CD14-positive monocyte (primary cell): ENCODE measurements at regions of chr2 and their contacts with region 1.

Region 1: DNA sequence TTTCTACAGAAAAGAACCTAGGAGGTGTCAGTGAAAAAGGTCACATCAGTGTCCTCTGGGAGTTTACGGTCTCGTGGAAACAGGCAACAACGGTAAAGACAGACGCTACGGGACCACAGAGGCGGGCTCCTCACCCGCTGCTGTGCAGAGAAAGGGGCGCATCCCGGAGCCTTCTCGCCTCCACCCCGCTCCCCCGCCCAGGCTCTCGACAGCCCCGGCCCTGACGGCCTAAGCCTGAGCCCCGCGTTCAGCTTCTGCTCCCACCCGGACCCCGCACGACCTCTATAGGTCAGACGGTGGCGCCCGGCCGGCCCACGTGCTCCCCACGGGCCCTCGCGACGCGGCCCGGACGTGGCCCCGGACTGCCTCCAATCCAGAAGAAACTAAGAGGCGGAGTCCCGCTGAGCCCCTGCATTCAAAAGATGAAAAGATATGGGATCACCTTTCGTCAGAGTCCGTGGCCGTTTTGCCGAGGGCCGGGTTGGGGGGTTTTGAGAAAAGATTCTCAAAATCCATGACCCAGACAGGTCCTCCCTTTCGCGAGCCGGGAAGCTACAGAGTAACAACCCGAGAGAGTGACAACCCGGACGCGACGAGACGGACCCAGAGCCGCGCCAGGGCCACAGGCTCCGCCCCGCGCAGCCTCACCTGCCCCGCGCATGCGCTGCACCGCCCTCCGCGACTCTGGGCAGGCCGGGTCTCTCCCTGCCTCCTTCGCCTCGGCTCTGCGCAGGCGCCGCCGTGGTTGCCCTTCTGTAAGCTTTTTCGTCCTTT is at the start of gene ZC3H8:
- DNase-seq: peak; percentile 88 to 90 (median 90)
- H3K4me3 ChIP-seq: peak within 1 kb of the TSS; percentile 48 to 82 (median 58)
- H3K4me3 Mint-ChIP-seq: peak within 1 kb of the TSS; percentile 84 to 90
- H3K27ac ChIP-seq: peak within 1 kb of the TSS; percentile 85
- H3K27ac Mint-ChIP-seq: peak within 1 kb of the TSS; percentile 91 to 97 (median 96)
- H3K4me1 ChIP-seq: peaks cover 37 to 49% of the 10 kb centered on the region in 2 donors
- H3K4me1 Mint-ChIP-seq: peaks cover 40% of the 10 kb centered on the region
- H3K27me3 ChIP-seq: no peaks in the 10 kb centered on the region
- H3K27me3 Mint-ChIP-seq: peaks cover 0 to 1% (median 0%) of the 10 kb centered on the region in 3 donors
- CTCF ChIP-seq: no peak
- polyA plus RNA-seq, gene ZC3H8: 2.3 to 6.9 (median 2.3) TPM

Region 2: GRCh38 chr2:112216166-112216565 is 38.5 kb before region 1 on chr2:
- intact Hi-C with region 1: no loop called
- DNase-seq: no peak
- H3K4me3 ChIP-seq: no peak overlapping the region
- H3K4me3 Mint-ChIP-seq: no peak overlapping the region
- H3K27ac ChIP-seq: no peak overlapping the region
- H3K27ac Mint-ChIP-seq: peak overlapping the region in 1 of 7 donors; percentile 48
- H3K4me1 ChIP-seq: no peaks in the 10 kb centered on the region
- H3K4me1 Mint-ChIP-seq: peaks cover 3% of the 10 kb centered on the region
- H3K27me3 ChIP-seq: no peaks in the 10 kb centered on the region
- H3K27me3 Mint-ChIP-seq: no peaks in the 10 kb centered on the region
- CTCF ChIP-seq: no peak

Region 3: DNA sequence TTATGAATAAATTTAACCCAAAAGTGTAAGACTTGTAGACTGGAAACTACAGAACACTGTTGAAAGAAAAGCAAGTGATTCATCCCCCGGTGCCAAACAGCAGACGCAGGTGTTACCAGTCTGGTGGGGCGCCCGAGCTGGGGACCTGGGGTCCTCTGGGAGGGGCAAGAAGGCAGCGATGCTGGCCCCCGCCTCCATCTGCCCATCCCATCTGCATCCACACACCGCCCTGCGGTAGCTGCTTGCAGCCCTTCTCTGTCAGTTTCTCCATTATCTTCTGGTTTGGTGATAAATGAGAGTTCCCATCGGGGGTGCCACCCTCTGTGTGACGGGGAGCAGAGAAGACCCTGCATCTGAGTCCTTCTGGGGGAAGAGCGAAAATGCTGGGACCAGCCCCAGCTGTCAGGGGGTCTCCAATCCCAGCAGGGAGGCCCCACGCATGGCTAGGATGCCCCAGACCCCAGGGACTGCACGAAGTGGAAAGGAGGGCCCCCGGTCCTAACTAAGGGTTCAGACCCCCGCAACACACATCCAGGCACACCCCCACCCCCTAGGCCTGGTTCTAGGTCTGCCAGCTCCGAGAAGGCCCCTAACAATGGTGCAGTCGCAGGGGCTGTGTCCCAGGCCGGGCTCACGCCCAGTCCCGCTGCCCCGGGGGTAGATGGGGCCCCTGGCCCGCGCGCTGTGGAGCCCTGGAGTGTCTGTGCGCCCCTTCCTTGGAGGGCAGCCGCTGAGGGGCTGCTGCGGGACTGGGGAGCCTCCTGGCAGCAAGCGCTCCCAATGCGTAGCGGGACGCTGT is 179.5 kb after region 1 on chr2:
- intact Hi-C with region 1: loop called (anchors 10 kb)
- DNase-seq: peak in 1 of 3 donors; percentile 2
- H3K4me3 ChIP-seq: no peak overlapping the region
- H3K4me3 Mint-ChIP-seq: no peak overlapping the region
- H3K27ac ChIP-seq: no peak overlapping the region
- H3K27ac Mint-ChIP-seq: no peak overlapping the region
- H3K4me1 ChIP-seq: peaks cover 0 to 5% of the 10 kb centered on the region in 2 donors
- H3K4me1 Mint-ChIP-seq: peaks cover 9% of the 10 kb centered on the region
- H3K27me3 ChIP-seq: no peaks in the 10 kb centered on the region
- H3K27me3 Mint-ChIP-seq: peaks cover under 1 to 3% (median 3%) of the 10 kb centered on the region in 3 donors
- CTCF ChIP-seq: no peak

Region 4: GRCh38 chr2:112542123-112542983 is 287.7 kb after region 1 on chr2 and contains the start of gene POLR1B:
- intact Hi-C with region 1: loop called in 1 of 2 experiments (anchors 5 kb)
- DNase-seq: peak; percentile 70 to 71 (median 71)
- H3K4me3 ChIP-seq: peak within 1 kb of the TSS; percentile 60 to 95 (median 94)
- H3K4me3 Mint-ChIP-seq: no peak within 1 kb of the TSS
- H3K27ac ChIP-seq: peak within 1 kb of the TSS; percentile 93 to 95
- H3K27ac Mint-ChIP-seq: peak within 1 kb of the TSS in 1 of 7 donors; percentile 99
- H3K4me1 ChIP-seq: peaks cover 21 to 27% of the 10 kb centered on the region in 2 donors
- H3K4me1 Mint-ChIP-seq: peaks cover 13% of the 10 kb centered on the region
- H3K27me3 ChIP-seq: no peaks in the 10 kb centered on the region
- H3K27me3 Mint-ChIP-seq: peaks cover 0 to 4% (median 0%) of the 10 kb centered on the region in 3 donors
- CTCF ChIP-seq: no peak
- polyA plus RNA-seq, gene POLR1B: 5.2 to 6.3 (median 5.3) TPM